ENCODE measurements at regions of chr1 and their contacts with region 1.

Region 1: GRCh38 chr1:94634977-94635416 is 93.4 kb upstream of the F3 start:
- DNase-seq: no peak
- ATAC-seq: no peak
- H3K4me3 ChIP-seq: no peak overlapping the region
- H3K27ac ChIP-seq: no peak overlapping the region
- H3K4me1 ChIP-seq: peaks cover 0 to 2% (median 0%) of the 10 kb centered on the region in 9 donors
- H3K27me3 ChIP-seq: peaks cover 0 to 6% (median 0%) of the 10 kb centered on the region in 7 donors
- CTCF ChIP-seq: peak in 1 of 9 donors; percentile 8

Region 2: DNA sequence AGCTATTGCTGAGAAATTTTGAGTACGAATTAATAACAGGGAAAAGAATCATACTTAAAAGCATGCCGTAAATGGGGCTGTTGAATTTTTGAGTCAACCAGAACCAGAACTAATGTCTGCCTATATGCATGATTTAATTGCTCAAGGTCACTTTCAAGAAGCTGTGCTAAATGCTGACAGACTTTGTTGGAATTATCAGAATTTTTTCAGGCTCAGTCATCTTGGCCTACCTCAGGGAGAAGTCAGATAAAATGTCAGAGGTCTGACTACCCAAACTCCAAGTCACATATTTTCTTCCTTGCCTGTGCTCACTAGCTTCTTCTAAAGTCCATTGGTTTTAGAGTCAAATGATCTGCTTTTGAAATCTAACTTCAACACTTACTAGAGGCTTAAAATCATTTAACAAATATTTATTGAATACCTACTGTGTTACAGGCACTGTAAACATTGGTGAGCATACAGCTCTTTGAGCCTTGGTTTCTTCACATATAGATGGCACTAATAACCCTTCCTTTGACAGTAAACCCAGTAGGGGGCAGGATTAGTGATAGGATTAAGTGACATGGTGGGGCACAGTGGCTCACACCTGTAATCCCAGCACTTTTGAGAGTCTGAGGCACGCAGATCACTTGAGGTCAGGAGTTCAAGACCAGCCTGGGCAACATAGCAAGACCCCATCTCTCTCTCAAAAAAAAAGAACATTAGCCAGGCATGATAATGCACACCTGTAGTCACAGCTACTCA is 63.9 kb after region 1 on chr1:
- intact Hi-C with region 1: loop called in 1 of 10 experiments (anchors 10 kb)
- DNase-seq: no peak
- ATAC-seq: peak in 1 of 8 donors; percentile 38
- H3K4me3 ChIP-seq: no peak overlapping the region
- H3K27ac ChIP-seq: no peak overlapping the region
- H3K4me1 ChIP-seq: peaks cover 0 to 8% (median 0%) of the 10 kb centered on the region in 9 donors
- H3K27me3 ChIP-seq: no peaks in the 10 kb centered on the region
- CTCF ChIP-seq: no peak

Measured in heart right ventricle (tissue), 16 donors.